OCI-LY7 (cell line): ENCODE measurements at regions of chr2 and their contacts with region 1.

Region 1: DNA sequence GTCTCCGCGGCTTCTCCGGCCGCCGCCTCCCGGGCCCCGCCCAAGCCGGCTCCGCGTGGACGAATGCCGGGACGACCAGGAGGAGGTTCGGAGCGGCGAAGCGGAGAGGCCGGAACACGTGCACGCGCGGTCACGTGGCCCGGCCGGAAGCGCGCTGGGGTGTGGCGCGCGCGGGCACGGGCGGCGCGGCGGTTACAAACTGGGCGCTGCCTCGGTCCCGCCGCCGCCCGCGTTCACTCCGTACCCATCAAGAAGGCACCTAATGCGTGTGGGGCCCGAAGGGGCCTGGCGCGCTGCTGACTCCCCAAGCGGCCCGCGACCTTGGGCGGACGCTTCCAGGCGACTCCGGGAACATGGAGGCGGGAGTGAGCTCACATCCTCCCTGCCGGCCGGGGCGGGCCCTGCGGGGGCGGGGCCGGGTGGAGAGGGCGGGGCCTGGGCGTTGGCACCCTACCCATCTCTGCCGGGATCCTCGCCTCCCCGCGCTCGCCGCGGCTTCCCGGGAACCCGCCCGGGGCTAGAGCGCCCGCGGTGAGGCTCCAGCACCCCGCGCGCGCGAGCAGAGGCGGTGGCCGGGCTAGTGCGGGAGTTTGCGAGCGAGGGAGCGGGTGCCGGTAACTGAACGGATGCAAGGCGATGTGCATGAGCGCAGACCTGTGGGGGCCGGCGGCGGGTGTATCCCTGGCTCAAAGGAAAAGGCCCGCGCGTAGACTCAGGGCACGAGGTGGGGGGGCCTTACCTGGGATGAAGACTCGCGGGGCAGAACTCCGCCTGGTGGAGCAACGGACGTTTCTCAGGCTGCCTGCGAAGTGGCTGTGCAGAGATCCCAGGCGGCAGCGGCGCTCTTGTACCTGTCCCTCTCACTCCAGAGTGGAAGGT is at the start of gene TMEM185B:
- DNase-seq: peak; percentile 90
- H3K4me3 ChIP-seq: peak within 1 kb of the TSS; percentile 76
- H3K27ac ChIP-seq: peak within 1 kb of the TSS; percentile 78
- H3K4me1 ChIP-seq: peaks cover 55% of the 10 kb centered on the region
- CTCF ChIP-seq: peak; percentile 40; the same call in 1 of the 2 replicates
- total RNA-seq, gene TMEM185B: 28.7 and 30.2 TPM in 2 replicates

Region 2: DNA sequence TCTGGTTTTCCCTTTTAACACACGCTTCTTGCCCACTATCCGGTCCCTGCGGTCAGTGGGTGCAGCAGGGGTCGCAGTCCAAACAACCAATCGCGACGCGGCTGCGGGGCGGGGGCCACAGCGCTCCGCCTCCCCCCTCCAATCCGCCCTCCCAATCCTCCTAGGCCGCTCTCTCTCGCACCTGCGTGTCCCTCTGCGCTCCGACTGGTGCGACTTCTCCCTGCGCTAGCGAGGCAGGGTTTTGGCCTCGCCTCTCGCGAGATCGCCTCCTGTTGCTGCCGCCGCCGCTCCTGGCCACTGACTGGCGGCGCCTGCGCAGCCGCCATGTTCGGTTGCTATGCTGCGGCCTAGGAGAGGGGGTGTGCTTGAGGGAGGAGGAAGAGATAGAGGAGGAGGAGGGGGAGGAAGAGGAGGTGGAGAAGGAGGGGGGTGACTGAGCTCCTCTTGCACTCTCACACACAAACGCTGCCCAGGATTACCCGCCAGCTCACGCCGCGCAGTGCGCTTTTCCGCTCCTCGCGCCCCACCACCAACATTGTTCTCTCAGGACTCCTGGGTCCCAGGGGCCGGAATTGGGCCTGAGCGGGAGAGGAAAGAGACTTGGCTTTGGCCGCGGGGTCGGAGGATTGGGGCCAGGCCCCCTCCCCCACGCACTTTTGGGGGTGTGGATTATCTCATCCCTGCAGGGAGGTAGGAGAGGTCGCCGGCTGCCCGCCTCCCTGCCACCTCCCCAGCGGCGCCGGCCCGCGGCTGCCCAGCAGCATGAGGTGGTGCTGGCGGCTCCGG is 463.6 kb before region 1 on chr2 and contains the start of gene PTPN4:
- CTCF ChIA-PET with region 1: no interaction called
- POLR2A ChIA-PET with region 1: no interaction called
- intact Hi-C with region 1: loop called (anchors 5 kb)
- DNase-seq: peak; percentile 99
- H3K4me3 ChIP-seq: peak within 1 kb of the TSS; percentile 95
- H3K27ac ChIP-seq: peak within 1 kb of the TSS; percentile 84
- H3K4me1 ChIP-seq: peaks cover 19% of the 10 kb centered on the region
- CTCF ChIP-seq: no peak
- total RNA-seq, gene PTPN4: 29.8 and 50.6 TPM in 2 replicates

Region 3: GRCh38 chr2:119983108-119983507 is 240.2 kb before region 1 on chr2:
- CTCF ChIA-PET with region 1: no interaction called
- POLR2A ChIA-PET with region 1: no interaction called
- intact Hi-C with region 1: no loop called
- DNase-seq: no peak
- H3K4me3 ChIP-seq: no peak overlapping the region
- H3K27ac ChIP-seq: no peak overlapping the region
- H3K4me1 ChIP-seq: no peaks in the 10 kb centered on the region
- CTCF ChIP-seq: no peak

Region 4: DNA sequence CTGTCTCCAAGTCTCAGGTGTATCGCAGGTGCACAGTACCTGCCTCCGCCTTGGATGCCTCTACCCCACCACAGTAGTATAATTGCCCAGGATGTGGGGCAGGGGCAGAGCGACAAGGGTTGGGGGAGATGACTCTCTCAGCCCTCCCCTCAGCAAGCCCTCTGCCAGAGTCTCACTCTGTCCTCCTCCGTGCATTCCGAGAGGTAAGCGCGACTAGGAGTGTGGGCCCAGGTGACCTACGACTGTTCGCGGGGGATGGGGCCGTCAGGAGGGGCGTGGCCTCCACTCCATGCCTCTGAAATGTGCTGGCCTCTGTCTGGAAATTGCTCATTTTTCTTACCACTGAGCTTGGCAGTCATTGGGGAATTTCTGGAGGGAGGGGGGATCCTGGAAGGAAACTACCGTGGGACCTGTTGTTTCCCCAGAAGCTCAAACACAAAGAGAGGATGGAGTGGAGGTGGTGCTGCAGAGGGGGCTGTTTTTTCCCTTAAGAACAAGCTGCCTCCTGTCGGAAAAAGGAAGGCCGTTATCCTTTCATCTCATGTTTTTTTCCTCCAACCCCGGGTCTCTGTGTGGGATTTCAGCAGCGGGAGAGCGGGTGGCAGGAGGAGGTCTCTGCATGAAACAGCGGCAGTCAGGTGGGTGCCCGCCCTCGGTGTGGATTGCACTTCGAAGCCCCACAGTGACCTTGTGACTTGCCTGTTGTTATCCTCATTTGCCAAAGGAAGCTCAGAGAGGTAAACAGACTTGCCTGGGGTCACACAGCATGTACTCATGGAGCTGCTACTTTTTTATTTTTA is 16.4 kb after region 1 on chr2:
- CTCF ChIA-PET with region 1: no interaction called
- POLR2A ChIA-PET with region 1: no interaction called
- intact Hi-C with region 1: no loop called
- DNase-seq: no peak
- H3K4me3 ChIP-seq: no peak overlapping the region
- H3K27ac ChIP-seq: no peak overlapping the region
- H3K4me1 ChIP-seq: no peaks in the 10 kb centered on the region
- CTCF ChIP-seq: no peak